HEK293T (cell line): ENCODE measurements at regions of chrX and their contacts with region 1.

Region 1: DNA sequence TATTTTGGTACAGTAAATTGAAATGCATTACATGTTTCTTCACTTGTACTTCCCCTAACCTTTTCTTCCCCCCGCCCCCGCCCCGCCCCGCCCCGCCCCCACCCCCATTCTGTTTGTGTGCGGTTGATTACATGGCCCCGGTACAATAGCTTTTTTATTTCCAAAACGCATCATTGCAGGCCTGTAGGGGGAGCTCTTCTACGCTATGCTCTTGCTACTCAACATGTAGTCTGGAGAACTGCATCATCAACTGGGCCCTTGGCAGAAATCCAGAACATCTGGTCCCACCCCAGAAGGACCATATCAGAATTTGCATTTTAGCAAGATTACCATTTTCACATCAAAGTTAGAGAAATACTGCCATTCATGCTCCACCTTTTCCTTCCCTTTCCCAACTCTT is 333.3 kb upstream of the DDX53 start:
- DNase-seq: peak; percentile 48

Region 2: DNA sequence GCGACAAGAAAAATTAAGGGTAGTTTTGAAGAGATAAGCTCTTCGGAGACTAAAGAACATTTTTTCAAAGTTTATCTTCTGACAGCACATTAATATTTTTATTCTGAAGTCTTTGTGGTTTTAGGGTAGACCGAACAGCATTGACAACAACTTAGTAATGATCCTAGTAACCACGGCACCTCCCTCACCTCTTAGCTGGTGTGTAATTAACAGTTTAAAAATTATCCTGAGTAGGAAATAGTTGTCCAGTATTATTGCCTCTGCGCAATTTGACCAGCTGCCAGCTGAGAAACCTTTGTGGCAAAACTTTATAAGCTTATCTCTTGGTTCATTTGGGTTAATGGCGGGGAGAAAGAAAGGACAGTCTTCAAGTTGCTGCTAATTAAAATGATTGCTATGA is 180.1 kb before region 1 on chrX:
- CTCF ChIA-PET with region 1: no interaction called
- POLR2A ChIA-PET with region 1: no interaction called
- DNase-seq: no peak

Region 3: DNA sequence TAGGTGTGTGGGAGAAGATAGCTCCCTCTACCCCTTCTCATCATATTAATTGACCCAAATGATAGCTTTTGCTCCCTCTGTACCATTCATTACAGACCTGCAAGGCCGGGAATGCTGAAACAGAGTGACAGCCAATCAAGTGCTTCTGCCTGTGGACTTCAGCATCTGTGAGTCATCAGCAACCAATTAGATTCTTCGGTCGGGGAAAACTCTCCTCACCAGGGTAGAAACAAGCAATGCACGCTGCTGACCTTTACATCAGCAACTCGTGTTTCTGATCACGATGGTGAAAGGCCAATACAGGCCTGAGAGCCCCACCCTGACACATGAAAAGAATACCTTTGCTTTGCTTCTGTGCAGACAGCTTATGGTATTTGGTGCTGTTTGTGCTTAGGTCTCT is 13.8 kb before region 1 on chrX:
- CTCF ChIA-PET with region 1: interaction called, 11 read pairs
- POLR2A ChIA-PET with region 1: no interaction called
- DNase-seq: peak; percentile 38